ENCODE measurements at regions of chr22 and their contacts with region 1.

Region 1: DNA sequence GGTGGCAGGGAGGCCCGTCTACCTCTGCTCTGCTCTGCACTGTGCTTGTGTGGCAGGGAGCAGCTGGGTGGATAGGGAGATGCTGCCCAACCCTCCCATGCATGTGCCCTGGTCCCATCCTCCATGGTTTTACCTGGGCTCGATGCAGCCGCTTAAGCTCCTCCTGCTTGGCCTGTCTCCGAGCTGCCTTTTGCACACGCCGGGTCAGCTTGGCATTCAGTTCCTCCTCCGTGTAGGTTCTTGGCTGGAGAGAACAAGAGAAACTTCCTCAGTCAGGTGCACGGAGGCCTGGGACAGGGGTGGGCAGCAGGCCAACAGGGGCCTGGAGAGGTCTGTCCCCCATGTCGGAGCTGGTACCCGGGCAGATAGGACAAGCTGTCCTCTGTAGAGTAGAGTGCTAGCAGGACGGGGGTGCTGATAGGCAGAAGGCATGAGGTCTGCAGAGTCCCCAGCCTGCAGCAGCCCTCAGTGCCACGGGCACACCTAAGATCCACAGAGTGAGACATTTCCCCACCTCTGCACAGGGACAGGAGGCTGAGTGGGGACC is 36.4 kb upstream of the BID start:
- DNase-seq: no peak
- H3K4me3 ChIP-seq: no peak overlapping the region
- H3K27ac ChIP-seq: no peak overlapping the region
- H3K4me1 ChIP-seq: no peaks in the 10 kb centered on the region
- H3K27me3 ChIP-seq: no peaks in the 10 kb centered on the region
- CTCF ChIP-seq: no peak
- POLR2A ChIP-seq: no peak

Region 2: DNA sequence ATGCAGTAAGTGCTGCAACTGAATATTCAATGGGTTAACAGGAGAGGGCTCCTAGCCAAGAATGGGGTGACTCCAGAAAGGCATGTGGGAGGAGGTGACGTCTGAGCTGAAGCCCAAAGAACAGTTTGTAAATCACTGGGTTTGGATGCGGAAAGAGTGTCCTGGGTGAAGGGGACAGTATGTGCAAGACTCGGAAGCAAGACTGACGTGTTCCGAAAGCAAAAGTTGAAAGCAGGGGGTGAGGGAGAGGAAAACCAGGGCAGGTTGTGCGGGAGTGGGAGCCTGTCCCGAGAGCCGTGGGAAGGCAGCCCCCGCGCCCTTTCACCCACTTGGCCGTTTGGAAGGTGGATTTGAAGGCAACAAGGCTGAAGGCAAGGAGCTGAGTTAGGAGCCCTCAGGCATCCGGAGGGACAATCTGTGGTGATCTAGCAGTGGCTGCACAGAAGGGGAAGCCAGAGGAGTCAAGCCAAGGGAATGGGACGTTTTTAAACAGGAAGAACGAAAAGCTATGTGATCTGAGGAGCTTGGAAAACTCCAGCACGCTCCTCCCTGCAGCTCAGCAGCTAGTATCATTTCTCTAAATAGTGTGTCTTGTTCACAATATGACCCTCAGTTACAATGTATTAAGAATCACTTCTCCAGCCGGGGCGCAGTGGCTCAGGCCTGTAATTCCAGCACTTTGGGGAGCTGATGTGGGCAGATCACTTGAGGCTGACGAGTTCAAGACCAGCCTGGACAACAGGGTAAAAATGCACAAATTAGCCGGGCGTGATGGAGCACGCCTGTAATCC is 239.6 kb before region 1 on chr22:
- intact Hi-C with region 1: no loop called
- DNase-seq: no peak
- H3K4me3 ChIP-seq: peak overlapping the region in 3 of 4 donors; percentile 18 to 50 (median 31)
- H3K27ac ChIP-seq: peak overlapping the region; percentile 64 to 92 (median 82)
- H3K4me1 ChIP-seq: peaks cover 0 to 39% (median 15%) of the 10 kb centered on the region in 3 donors
- H3K27me3 ChIP-seq: peaks cover 0 to 63% (median 0%) of the 10 kb centered on the region in 4 donors
- CTCF ChIP-seq: no peak
- POLR2A ChIP-seq: peak in 2 of 4 donors; percentile 11 to 34

Region 3: DNA sequence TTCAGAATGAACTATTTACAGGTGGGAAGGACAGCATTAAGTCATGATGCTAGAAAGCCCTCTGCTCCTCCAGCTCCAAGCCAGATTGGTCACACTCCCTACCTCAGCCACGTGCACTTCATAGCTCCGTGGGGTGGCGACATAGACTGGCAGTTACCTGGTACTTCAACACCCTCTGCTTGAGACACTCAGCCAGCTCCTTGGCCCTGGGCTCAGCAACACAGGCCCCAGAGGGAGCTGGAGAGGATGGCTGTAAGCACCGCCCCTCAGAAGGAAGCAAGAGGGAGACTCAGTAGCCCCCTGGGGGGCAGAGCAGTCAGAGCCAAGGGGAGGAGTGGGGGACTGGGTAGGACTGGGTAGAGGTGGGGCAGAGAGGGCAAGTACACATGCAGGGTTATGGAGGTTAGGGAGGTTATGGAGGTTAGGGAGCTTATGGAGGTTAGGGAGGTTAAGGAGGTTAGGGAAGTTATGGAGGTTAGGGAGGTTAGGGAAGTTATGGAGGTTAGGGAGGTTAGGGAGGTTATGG is 65.7 kb after region 1 on chr22:
- intact Hi-C with region 1: loop called (anchors 10 kb)
- DNase-seq: no peak
- H3K4me3 ChIP-seq: no peak overlapping the region
- H3K27ac ChIP-seq: peak overlapping the region in 1 of 4 donors; percentile 21
- H3K4me1 ChIP-seq: peaks cover 0 to 10% (median 6%) of the 10 kb centered on the region in 3 donors
- H3K27me3 ChIP-seq: no peaks in the 10 kb centered on the region
- CTCF ChIP-seq: no peak
- POLR2A ChIP-seq: no peak